Posterior cingulate gyrus (tissue), 11 donors: ENCODE measurements at regions of chr14 and their contacts with region 1.

Region 1: GRCh38 chr14:105281371-105282097 is 19.3 kb downstream of the BRF1 start:
- DNase-seq: peak in 4 of 10 donors; percentile 31 to 86 (median 43)

Region 2: DNA sequence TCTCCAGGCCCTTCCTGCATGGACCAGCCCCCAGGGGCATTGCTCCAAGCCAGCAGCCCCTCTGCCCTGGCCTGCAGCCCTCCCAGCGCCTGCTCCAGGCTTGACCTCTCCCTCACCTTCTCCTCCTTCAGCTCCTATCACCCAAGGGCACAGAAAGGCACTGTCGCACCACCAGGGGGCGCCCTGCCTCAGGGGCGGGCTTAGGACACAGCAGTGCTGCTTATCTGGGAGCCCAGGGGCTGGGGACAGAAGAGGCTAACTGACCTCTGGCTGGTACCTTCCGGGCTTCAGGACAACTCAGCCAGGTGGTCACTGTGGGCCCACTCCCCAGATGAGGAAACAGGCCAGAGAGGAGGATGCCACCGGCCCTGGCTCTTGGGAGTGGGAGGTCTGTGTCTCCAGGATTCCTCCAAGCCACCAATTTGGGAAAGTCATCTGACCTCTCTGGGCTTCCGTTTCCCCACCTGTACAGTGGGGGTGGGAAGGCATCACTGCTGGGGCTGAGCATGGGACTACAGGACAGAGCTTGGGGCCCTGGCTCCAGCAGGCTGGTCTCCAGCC is 191.0 kb before region 1 on chr14:
- intact Hi-C with region 1: loop called (anchors 1 kb)
- DNase-seq: peak; percentile 64 to 97 (median 82)

Region 3: DNA sequence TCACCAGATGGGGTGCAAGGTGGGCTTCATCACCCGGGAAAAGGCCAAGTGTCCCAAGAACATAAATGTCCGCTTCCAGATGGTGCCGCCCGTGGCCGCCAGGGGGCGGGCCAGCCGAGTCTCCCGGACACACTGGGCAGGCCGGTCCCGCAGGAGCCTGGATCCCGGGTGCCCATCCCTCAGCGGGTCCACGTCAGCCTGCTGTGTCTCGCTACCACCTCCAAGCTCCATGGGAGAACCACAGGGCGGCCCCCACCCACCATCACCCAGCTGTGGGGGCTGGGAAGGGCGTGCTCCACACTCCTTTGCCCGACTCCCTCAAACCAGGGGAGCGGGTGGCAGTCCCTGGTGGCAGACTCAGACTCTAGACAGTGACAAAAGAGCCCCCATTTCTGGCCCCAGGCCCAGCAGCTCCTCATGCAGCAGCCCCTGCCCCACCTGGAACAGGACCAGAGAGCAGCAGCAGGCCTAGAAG is 78.4 kb before region 1 on chr14:
- intact Hi-C with region 1: loop called (anchors 1 kb)
- DNase-seq: peak; percentile 61 to 97 (median 82)

Region 4: DNA sequence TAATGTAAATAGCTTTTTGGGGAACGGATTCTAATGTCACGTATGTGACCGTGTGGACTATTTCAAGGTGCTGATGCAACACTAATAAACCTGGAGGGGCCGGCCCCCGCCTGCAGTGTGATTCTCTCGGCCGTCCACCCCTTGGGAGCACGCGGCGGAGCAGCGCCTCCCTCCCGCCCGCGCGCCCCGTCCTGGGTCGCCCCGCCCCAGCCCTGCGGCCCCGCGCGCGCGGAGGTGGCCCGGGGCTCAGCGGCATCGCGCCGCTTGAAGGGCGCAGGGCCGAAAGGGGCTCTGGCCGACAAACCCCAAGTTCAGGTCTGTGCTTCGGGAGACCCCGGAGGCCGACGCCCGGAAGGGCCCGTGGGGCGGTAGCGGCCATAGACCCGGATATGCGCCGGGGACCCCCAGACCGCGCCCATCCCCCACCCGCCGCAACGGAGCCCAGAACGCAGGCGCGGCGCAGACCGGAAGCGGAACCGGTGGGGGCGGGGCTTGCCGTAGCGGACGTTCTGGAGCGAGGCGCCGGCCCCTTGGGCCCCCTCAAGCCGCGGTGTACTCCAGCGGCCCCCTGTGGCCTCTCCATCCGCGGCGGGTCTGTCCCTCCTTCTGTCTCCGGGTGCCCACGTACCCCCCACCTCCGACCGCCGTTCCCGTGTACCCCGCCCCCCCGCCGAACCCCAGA is 116.7 kb after region 1 on chr14 and contains the start of gene TEX22:
- intact Hi-C with region 1: no loop called
- DNase-seq: peak; percentile 78 to 97 (median 86)